Activated CD4-positive, alpha-beta memory T cell treated with anti-CD3 and anti-CD28 coated beads, Interleukin-2, amount 10 ng/mL, durations not matched to agents 7 days and 5 days (primary cell): ENCODE measurements at regions of chr16 and their contacts with region 1.

Region 1: GRCh38 chr16:75432828-75433731 is at the start of gene CFDP1:
- DNase-seq: peak; percentile 95
- H3K4me3 Mint-ChIP-seq: peak within 1 kb of the TSS; percentile 81
- H3K27ac Mint-ChIP-seq: peak within 1 kb of the TSS; percentile 93
- H3K4me1 Mint-ChIP-seq: peaks cover 33% of the 10 kb centered on the region
- H3K27me3 Mint-ChIP-seq: no peaks in the 10 kb centered on the region
- total RNA-seq, gene CFDP1: 35.1 to 36.2 TPM

Region 2: DNA sequence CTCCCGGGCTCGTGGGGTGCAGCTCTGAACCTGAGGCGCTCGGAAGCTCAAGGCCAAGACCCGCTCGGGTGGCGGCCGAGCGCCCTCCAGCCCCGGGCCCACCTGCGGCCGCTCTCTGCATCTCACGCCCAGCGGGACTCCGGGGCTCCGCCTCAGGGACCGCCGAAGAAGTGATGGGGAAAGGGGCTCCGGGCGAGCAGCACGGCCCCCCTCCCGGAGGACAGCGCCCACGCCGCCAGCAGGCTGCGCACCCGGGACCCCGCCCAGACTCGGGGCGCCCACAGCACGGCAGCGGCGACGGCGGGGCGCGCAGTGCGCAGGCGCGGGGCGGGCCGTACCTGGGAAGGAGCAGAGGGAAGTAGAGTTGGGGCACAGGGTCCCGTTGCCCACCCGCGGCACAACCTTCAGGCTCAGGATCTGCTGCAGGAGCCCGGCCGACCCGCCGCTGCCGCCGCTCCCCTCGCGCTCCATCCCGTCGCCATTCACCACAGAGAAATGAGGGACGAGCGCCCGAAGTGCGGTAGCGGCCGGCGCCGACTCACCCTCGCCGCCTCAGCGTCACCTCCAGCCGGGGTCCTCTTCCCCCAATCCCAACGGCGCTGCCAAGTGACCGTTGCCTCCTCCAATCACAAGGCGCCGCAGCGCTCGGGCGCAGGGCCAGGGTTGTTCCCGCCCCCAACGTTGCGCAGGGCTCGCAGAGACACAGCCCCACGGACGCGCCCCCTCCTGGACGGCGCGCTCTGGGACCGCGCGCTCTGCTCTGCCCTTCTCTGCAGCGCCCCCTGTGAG is 31.2 kb after region 1 on chr16 and contains the start of gene TMEM170A:
- CTCF ChIA-PET with region 1: interaction called, 50 read pairs
- POLR2A ChIA-PET with region 1: interaction called, 28 read pairs
- DNase-seq: peak; percentile 99
- H3K4me3 Mint-ChIP-seq: peak within 1 kb of the TSS; percentile 90
- H3K27ac Mint-ChIP-seq: peak within 1 kb of the TSS; percentile 92
- H3K4me1 Mint-ChIP-seq: peaks cover 42% of the 10 kb centered on the region
- H3K27me3 Mint-ChIP-seq: no peaks in the 10 kb centered on the region
- total RNA-seq, gene TMEM170A: 30.8 to 33.9 TPM

Region 3: GRCh38 chr16:75566040-75566810 is 133.1 kb after region 1 on chr16 and contains the start of gene GABARAPL2:
- CTCF ChIA-PET with region 1: no interaction called
- POLR2A ChIA-PET with region 1: interaction called, 14 read pairs
- DNase-seq: peak; percentile 92
- H3K4me3 Mint-ChIP-seq: peak within 1 kb of the TSS; percentile 100
- H3K27ac Mint-ChIP-seq: peak within 1 kb of the TSS; percentile 87
- H3K4me1 Mint-ChIP-seq: peaks cover 38% of the 10 kb centered on the region
- H3K27me3 Mint-ChIP-seq: peaks cover 14% of the 10 kb centered on the region
- total RNA-seq, gene GABARAPL2: 84.9 to 86.2 TPM